ENCODE measurements at regions of chr14 and their contacts with region 1.

Region 1: GRCh38 chr14:63276492-63277342 is 42.0 kb downstream of the GPHB5 start:
- DNase-seq: peak in 1 of 2 experiments; percentile 35
- H3K4me3 ChIP-seq: no peak overlapping the region
- H3K4me3 Mint-ChIP-seq: no peak overlapping the region
- H3K27ac Mint-ChIP-seq: no peak overlapping the region
- H3K4me1 ChIP-seq: no peaks in the 10 kb centered on the region
- H3K4me1 Mint-ChIP-seq: no peaks in the 10 kb centered on the region
- H3K27me3 ChIP-seq: no peaks in the 10 kb centered on the region
- H3K27me3 Mint-ChIP-seq: no peaks in the 10 kb centered on the region
- CTCF ChIP-seq: peak; percentile 60 to 63

Region 2: GRCh38 chr14:62162998-62163589 is 1113.6 kb before region 1 on chr14:
- CTCF ChIA-PET with region 1: no interaction called
- POLR2A ChIA-PET with region 1: no interaction called
- intact Hi-C with region 1: loop called (anchors 1 kb)
- DNase-seq: peak in 1 of 2 experiments; percentile 48
- H3K4me3 ChIP-seq: no peak overlapping the region
- H3K4me3 Mint-ChIP-seq: no peak overlapping the region
- H3K27ac Mint-ChIP-seq: no peak overlapping the region
- H3K4me1 ChIP-seq: no peaks in the 10 kb centered on the region
- H3K4me1 Mint-ChIP-seq: no peaks in the 10 kb centered on the region
- H3K27me3 ChIP-seq: no peaks in the 10 kb centered on the region
- H3K27me3 Mint-ChIP-seq: peaks cover 14% of the 10 kb centered on the region
- CTCF ChIP-seq: peak; percentile 68 to 80

Region 3: GRCh38 chr14:62179367-62180018 is 1097.2 kb before region 1 on chr14:
- CTCF ChIA-PET with region 1: no interaction called
- POLR2A ChIA-PET with region 1: no interaction called
- intact Hi-C with region 1: loop called (anchors 1 kb)
- DNase-seq: peak; percentile 58 to 60
- H3K4me3 ChIP-seq: no peak overlapping the region
- H3K4me3 Mint-ChIP-seq: no peak overlapping the region
- H3K27ac Mint-ChIP-seq: no peak overlapping the region
- H3K4me1 ChIP-seq: no peaks in the 10 kb centered on the region
- H3K4me1 Mint-ChIP-seq: no peaks in the 10 kb centered on the region
- H3K27me3 ChIP-seq: no peaks in the 10 kb centered on the region
- H3K27me3 Mint-ChIP-seq: no peaks in the 10 kb centered on the region
- CTCF ChIP-seq: peak; percentile 62 to 64

Region 4: DNA sequence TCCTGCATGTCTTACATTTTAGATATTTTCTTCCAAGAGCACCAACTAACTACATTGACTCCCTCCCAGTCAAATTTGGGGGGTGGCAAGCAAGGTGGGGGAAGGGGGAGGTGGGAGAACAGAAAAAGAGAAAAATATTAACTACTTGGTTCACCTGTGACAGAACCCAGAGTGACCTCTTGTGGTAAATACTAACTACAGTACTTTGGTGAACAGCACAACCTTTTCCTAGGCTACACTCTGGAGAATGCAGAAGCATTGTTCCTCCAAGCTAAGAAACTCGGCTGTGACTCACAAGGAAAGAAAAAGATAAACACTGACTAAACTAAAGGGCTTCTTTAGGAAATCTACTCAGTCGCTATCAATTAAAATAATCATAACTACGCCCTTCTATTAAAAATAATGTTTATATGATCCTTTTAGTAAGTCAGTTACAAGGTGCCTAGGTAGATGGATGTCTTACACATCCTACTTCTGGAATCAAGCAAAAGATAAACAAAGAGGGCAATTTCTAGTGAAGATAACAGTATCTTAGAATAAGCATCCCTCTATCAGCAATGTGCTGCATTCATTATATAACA is 236.8 kb before region 1 on chr14:
- CTCF ChIA-PET with region 1: no interaction called
- POLR2A ChIA-PET with region 1: no interaction called
- intact Hi-C with region 1: loop called (anchors 5 kb)
- DNase-seq: peak in 1 of 2 experiments; percentile 35
- H3K4me3 ChIP-seq: no peak overlapping the region
- H3K4me3 Mint-ChIP-seq: no peak overlapping the region
- H3K27ac Mint-ChIP-seq: no peak overlapping the region
- H3K4me1 ChIP-seq: no peaks in the 10 kb centered on the region
- H3K4me1 Mint-ChIP-seq: peaks cover 6% of the 10 kb centered on the region
- H3K27me3 ChIP-seq: no peaks in the 10 kb centered on the region
- H3K27me3 Mint-ChIP-seq: no peaks in the 10 kb centered on the region
- CTCF ChIP-seq: peak; percentile 42 to 53

Region 5: GRCh38 chr14:63174760-63175211 is 101.9 kb before region 1 on chr14:
- CTCF ChIA-PET with region 1: no interaction called
- POLR2A ChIA-PET with region 1: no interaction called
- intact Hi-C with region 1: loop called (anchors 1 kb)
- DNase-seq: peak in 1 of 2 experiments; percentile 39
- H3K4me3 ChIP-seq: no peak overlapping the region
- H3K4me3 Mint-ChIP-seq: no peak overlapping the region
- H3K27ac Mint-ChIP-seq: no peak overlapping the region
- H3K4me1 ChIP-seq: no peaks in the 10 kb centered on the region
- H3K4me1 Mint-ChIP-seq: no peaks in the 10 kb centered on the region
- H3K27me3 ChIP-seq: no peaks in the 10 kb centered on the region
- H3K27me3 Mint-ChIP-seq: no peaks in the 10 kb centered on the region
- CTCF ChIP-seq: peak; percentile 51 to 59

Measured in Caco-2 (cell line).